HEK293 (cell line): ENCODE measurements at regions of chr4 and their contacts with region 1.

Region 1: GRCh38 chr4:180028682-180029081 is 2214.5 kb upstream of the TENM3 start:
- H3K4me3 ChIP-seq: no peak overlapping the region
- H3K27ac ChIP-seq: no peak overlapping the region
- H3K4me1 ChIP-seq: no peaks in the 10 kb centered on the region
- CTCF ChIP-seq: no peak

Region 2: DNA sequence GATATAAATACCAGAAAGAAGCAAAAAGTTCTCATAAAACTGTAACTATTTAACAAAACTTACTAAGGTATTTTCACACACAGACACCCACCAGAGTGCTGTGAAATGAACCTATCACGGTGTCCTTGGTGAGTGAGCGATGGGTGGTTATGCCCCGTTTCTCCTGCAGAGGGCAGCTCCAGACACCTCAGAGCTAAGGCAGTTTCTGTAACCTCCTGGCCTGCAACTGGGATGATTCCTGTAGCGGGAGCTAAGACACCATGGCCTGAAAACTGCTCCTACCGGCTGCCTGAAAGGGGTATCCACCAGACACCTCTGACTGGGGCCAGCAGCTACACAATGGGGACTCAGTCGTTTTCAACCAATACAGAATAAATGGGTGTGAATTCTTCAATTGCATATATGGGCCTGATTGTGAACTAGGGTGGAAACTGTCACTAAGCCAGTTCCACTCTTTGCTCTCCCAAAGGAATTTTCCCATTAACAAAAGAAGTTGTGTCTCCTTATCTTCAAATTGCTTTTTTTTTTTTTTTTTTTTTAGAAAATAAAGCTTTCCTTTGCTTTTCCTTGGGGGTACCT is 161.3 kb before region 1 on chr4:
- CTCF ChIA-PET with region 1: interaction called, 19 read pairs
- POLR2A ChIA-PET with region 1: no interaction called
- H3K4me3 ChIP-seq: no peak overlapping the region
- H3K27ac ChIP-seq: no peak overlapping the region
- H3K4me1 ChIP-seq: no peaks in the 10 kb centered on the region
- CTCF ChIP-seq: peak; percentile 50